GM12878 (cell line): ENCODE measurements at regions of chr7 and their contacts with region 1.

Region 1: DNA sequence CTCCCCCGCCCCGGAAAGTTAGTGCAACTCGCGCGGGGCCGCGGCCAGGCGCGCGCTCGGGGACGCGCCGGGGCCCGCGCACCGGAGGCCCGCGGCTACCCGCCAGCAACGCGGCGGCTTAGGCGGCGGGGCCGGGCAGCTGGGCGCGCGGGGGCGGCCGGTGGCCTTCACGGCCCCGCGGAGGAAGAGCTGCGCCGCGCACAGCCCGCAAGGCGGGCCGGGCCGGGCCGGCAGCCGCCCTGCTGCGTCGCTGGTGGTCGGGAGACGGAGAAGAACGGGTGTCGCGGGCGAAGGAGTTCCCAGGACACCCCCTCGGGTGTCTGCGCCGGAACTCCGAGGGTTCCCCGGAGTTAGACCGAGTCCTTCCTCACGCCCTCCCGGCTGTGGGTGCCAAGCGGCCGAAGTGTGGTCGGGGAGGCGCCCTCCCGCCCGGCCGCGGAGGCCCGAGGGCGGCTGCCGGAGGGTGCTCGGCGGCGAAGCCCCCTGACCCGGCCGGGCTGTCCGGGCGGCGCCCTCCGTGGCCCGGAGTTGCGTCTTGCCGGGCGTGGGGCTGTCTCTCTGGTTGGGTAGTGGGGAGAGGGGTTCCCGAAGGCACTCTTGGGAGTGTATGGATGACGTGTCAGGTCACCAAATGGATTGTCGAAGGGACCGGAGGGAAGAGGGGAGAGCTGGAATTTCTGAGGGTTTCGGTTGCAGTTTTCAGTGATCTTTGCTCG is 584 bp downstream of the ST7 start:
- DNase-seq: no peak
- ATAC-seq: peak; percentile 21
- H3K4me3 ChIP-seq: peak overlapping the region; percentile 79
- H3K27ac ChIP-seq: peak overlapping the region; percentile 98
- H3K4me1 ChIP-seq: peaks cover 22% of the 10 kb centered on the region
- H3K27me3 ChIP-seq: no peaks in the 10 kb centered on the region
- CTCF ChIP-seq: no peak
- EP300 ChIP-seq: peak in 1 of 2 experiments; percentile 19; a peak in 1 of 4 replicates
- POLR2A ChIP-seq: peak; percentile 62
- RAD21 ChIP-seq: no peak

Region 2: GRCh38 chr7:116871061-116871700 is 82.7 kb before region 1 on chr7:
- CTCF ChIA-PET with region 1: no interaction called
- POLR2A ChIA-PET with region 1: no interaction called
- RAD21 ChIA-PET with region 1: no interaction called
- SMC1A ChIA-PET with region 1: no interaction called
- in situ Hi-C with region 1: no loop called
- intact Hi-C with region 1: loop called (anchors 2 kb)
- DNase-seq: no peak
- ATAC-seq: 0 out of 3 replicates have a peak, but pooled peaks have one; percentile 10
- H3K4me3 ChIP-seq: no peak overlapping the region
- H3K27ac ChIP-seq: no peak overlapping the region
- H3K4me1 ChIP-seq: no peaks in the 10 kb centered on the region
- H3K27me3 ChIP-seq: no peaks in the 10 kb centered on the region
- CTCF ChIP-seq: no peak
- EP300 ChIP-seq: no peak
- POLR2A ChIP-seq: no peak
- RAD21 ChIP-seq: no peak

Region 3: DNA sequence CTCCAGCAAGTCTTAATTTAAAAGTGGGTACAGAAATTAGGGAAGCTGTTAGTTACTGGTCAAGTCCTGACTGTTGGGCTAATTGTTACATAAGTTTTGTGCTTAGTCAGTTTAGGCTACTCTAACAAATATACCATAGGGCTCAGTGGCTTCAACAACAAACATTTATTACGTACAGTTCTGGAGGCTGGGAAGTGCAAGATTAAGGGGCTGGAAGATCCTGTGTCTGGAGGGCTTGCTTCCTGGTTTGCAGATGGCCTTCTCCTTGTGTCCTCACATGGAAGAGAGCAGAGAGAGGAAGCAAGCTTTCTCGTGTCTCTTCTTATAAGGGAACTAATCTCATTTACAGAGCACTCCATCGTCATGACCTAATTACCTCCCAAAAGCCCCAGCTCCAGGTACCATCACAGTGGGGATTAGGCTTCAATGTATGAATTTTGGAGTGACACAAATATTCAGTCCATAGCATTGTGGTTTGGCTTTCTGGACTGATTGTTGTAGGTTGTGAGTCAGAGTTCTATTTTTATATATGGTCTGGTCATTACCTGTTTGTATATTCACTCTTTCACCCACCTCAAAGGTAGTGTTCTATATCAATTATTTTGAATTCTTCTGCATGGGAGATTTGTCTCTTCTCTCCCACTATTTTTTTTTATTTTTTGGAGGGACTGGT is 16.5 kb after region 1 on chr7:
- CTCF ChIA-PET with region 1: interaction called, 19 read pairs
- POLR2A ChIA-PET with region 1: interaction called, 49 read pairs
- RAD21 ChIA-PET with region 1: interaction called, 21 read pairs
- SMC1A ChIA-PET with region 1: interaction called, 64 read pairs
- in situ Hi-C with region 1: no loop called
- intact Hi-C with region 1: loop called (anchors 2 kb)
- DNase-seq: no peak
- ATAC-seq: peak; percentile 87
- H3K4me3 ChIP-seq: peak overlapping the region; percentile 20; the same call in 1 of the 2 replicates
- H3K27ac ChIP-seq: peak overlapping the region; percentile 57
- H3K4me1 ChIP-seq: peaks cover 21% of the 10 kb centered on the region
- H3K27me3 ChIP-seq: no peaks in the 10 kb centered on the region
- CTCF ChIP-seq: no peak
- EP300 ChIP-seq: peak in 1 of 2 experiments; percentile 24; a peak in 1 of 4 replicates
- POLR2A ChIP-seq: no peak
- RAD21 ChIP-seq: no peak

Region 4: GRCh38 chr7:117008883-117009531 is 55.1 kb after region 1 on chr7:
- CTCF ChIA-PET with region 1: interaction called, 10 read pairs
- POLR2A ChIA-PET with region 1: interaction called, 7 read pairs
- RAD21 ChIA-PET with region 1: interaction called, 15 read pairs
- SMC1A ChIA-PET with region 1: interaction called, 40 read pairs
- in situ Hi-C with region 1: no loop called
- intact Hi-C with region 1: loop called (anchors 2 kb)
- DNase-seq: no peak
- ATAC-seq: peak; percentile 9
- H3K4me3 ChIP-seq: 0 out of 2 replicates have a peak overlapping the region, but pooled peaks have one; percentile 9
- H3K27ac ChIP-seq: peak overlapping the region; percentile 100
- H3K4me1 ChIP-seq: peaks cover 46% of the 10 kb centered on the region
- H3K27me3 ChIP-seq: no peaks in the 10 kb centered on the region
- CTCF ChIP-seq: no peak
- EP300 ChIP-seq: peak in 1 of 2 experiments; percentile 50; a peak in 1 of 4 replicates
- POLR2A ChIP-seq: no peak
- RAD21 ChIP-seq: no peak

Region 5: DNA sequence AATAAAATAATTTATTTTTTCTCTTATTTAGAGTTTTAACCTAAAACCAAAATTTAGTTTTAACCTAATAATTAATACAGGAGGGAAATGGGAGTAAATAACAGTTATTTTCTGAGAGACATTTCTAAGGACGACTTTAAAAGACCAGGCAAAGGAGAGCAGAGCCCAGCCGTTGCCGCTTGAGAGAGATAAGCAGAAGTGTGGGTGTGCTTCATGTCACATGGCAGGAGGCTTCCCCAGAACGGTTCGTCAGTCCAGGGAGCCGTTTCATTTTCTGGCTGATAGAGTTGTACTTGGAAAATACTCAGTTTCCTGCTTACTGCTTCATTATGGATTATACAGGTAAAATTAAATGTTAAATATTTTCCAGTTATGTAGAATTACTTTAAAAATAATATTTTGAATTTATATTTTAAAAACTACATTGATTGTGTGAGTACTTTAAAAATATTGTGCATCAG is 60.8 kb after region 1 on chr7:
- CTCF ChIA-PET with region 1: interaction called, 10 read pairs
- POLR2A ChIA-PET with region 1: interaction called, 7 read pairs
- RAD21 ChIA-PET with region 1: interaction called, 15 read pairs
- SMC1A ChIA-PET with region 1: interaction called, 40 read pairs
- in situ Hi-C with region 1: no loop called
- intact Hi-C with region 1: loop called (anchors 2 kb)
- DNase-seq: no peak
- ATAC-seq: peak; percentile 52
- H3K4me3 ChIP-seq: peak overlapping the region; percentile 66; the same call in 1 of the 2 replicates
- H3K27ac ChIP-seq: peak overlapping the region; percentile 79
- H3K4me1 ChIP-seq: peaks cover 43% of the 10 kb centered on the region
- H3K27me3 ChIP-seq: no peaks in the 10 kb centered on the region
- CTCF ChIP-seq: no peak
- EP300 ChIP-seq: no peak
- POLR2A ChIP-seq: peak; percentile 51; the same call in 1 of the 2 replicates
- RAD21 ChIP-seq: no peak